Activated CD4-positive, alpha-beta memory T cell treated with anti-CD3 and anti-CD28 coated beads, Interleukin-2, amount 10 ng/mL, durations not matched to agents 7 days and 5 days (primary cell): ENCODE measurements at regions of chr11 and their contacts with region 1.

Region 1: GRCh38 chr11:59171508-59172322 is at the start of gene DTX4:
- DNase-seq: peak; percentile 91
- H3K4me3 Mint-ChIP-seq: peak within 1 kb of the TSS; percentile 73
- H3K27ac Mint-ChIP-seq: no peak within 1 kb of the TSS
- H3K4me1 Mint-ChIP-seq: peaks cover 7% of the 10 kb centered on the region
- H3K27me3 Mint-ChIP-seq: peaks cover 22% of the 10 kb centered on the region
- total RNA-seq, gene DTX4: 0.30 to 0.48 TPM

Region 2: GRCh38 chr11:58345204-58345603 is 826.5 kb before region 1 on chr11:
- CTCF ChIA-PET with region 1: no interaction called
- POLR2A ChIA-PET with region 1: no interaction called
- DNase-seq: no peak
- H3K4me3 Mint-ChIP-seq: no peak overlapping the region
- H3K27ac Mint-ChIP-seq: no peak overlapping the region
- H3K4me1 Mint-ChIP-seq: no peaks in the 10 kb centered on the region
- H3K27me3 Mint-ChIP-seq: peaks cover 3% of the 10 kb centered on the region

Region 3: DNA sequence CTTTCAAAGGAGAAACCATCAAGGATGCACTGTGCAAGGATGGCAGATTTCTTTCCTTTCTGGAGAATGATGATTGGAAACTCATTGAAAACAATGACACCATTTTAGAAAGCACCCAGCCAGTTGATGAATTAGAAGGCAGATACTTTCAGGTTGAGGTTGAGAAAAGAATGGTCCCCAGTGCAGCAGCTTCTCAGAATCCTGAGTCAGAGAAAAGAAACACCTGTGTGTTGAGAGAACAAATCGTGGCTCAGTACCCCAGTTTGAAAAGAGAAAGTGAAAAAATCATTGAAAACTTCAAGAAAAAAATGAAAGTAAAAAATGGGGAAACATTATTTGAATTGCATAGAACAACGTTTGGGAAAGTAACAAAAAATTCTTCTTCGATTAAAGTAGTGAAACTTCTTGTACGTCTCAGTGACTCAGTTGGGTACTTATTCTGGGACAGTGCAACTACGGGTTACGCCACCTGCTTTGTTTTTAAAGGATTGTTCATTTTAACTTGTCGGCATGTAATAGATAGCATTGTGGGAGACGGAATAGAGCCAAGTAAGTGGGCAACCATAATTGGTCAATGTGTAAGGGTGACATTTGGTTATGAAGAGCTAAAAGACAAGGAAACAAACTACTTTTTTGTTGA is 19.3 kb before region 1 on chr11:
- CTCF ChIA-PET with region 1: interaction called, 66 read pairs
- POLR2A ChIA-PET with region 1: interaction called, 4 read pairs
- DNase-seq: no peak
- H3K4me3 Mint-ChIP-seq: peak overlapping the region; percentile 28
- H3K27ac Mint-ChIP-seq: peak overlapping the region; percentile 76
- H3K4me1 Mint-ChIP-seq: peaks cover 53% of the 10 kb centered on the region
- H3K27me3 Mint-ChIP-seq: no peaks in the 10 kb centered on the region

Region 4: DNA sequence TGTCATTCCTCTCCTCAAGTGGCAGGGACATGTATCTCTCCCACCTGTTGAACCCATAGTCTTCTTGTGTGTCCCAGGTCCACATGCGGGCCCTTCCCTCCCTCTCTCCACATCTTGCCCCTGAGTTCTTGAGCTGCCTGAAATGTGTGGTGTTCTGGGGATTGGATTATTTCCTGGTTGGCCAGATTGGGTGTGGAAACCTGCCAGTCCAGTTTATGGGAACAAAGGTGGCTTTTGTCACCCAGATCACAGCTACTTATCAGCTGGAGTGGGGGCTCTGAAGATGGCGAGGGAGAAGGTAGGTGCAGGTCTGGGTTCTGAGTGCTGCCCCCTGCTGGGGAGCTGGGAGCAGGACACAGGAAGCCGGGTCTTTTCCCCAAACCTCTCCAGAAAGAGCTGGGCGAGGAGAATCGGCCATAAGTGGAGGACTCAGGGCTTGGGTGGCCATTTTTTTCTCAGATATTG is 14.4 kb after region 1 on chr11:
- CTCF ChIA-PET with region 1: interaction called, 105 read pairs
- POLR2A ChIA-PET with region 1: no interaction called
- DNase-seq: peak; percentile 55
- H3K4me3 Mint-ChIP-seq: no peak overlapping the region
- H3K27ac Mint-ChIP-seq: no peak overlapping the region
- H3K4me1 Mint-ChIP-seq: no peaks in the 10 kb centered on the region
- H3K27me3 Mint-ChIP-seq: peaks cover 1% of the 10 kb centered on the region

Region 5: GRCh38 chr11:59207988-59208451 is 36.3 kb after region 1 on chr11:
- CTCF ChIA-PET with region 1: interaction called, 30 read pairs
- POLR2A ChIA-PET with region 1: no interaction called
- DNase-seq: peak; percentile 35
- H3K4me3 Mint-ChIP-seq: no peak overlapping the region
- H3K27ac Mint-ChIP-seq: no peak overlapping the region
- H3K4me1 Mint-ChIP-seq: peaks cover 18% of the 10 kb centered on the region
- H3K27me3 Mint-ChIP-seq: peaks cover 22% of the 10 kb centered on the region

Region 6: GRCh38 chr11:59429924-59430516 is 258.3 kb after region 1 on chr11:
- CTCF ChIA-PET with region 1: interaction called, 24 read pairs
- POLR2A ChIA-PET with region 1: no interaction called
- DNase-seq: peak; percentile 27
- H3K4me3 Mint-ChIP-seq: no peak overlapping the region
- H3K27ac Mint-ChIP-seq: no peak overlapping the region
- H3K4me1 Mint-ChIP-seq: no peaks in the 10 kb centered on the region
- H3K27me3 Mint-ChIP-seq: peaks cover 12% of the 10 kb centered on the region